ENCODE measurements at regions of chr3 and their contacts with region 1.

Region 1: DNA sequence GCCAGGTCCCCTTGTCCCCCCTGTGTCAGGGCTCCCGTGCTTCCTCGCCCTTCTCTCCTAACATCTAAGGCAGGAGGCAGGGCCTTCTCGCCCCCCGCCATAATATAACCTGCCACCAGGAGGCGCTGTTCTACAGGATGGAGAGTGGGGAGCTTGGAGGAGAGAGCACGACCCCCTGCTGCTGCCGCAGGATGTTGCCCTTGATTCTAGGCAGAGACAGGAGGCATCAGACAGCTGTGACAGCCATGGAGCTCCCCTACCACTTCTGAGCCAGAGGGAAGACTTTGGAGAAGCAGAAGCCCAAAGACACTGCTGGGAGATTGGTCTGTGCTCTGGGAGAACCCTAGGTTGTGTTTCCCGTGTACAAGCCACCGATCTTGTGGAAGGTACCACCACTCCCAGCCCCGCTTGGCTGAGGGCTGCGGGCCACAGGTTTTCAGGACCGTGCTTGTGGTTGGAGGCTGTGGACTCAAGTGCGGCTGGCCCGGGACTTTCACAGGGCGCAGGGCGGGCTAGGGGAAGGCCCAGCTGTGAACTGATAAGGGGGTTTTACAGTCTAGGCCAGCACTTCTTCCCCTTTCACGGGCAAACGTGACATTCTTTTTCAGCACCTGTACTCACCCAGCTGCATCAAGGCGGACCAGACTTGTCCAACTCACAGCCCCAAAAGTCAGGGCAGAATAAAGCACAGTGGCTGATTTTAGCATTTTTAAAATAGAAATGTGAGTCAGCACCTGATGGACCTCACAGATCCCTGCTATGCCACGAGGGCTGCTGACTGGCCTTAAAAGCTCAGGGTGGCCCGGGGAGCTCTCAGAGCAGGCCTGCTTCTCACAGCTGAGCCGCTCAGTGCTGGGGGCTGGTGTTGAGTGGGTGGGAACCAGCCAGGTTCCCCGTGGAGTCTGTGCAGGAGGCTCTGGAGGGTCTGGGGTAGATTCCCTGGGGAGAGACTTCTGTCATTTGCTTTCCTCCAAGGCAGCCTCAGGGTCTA is 2.6 kb upstream of the TIGIT start:
- DNase-seq: peak; percentile 79
- ATAC-seq: peak; percentile 95
- H3K4me3 ChIP-seq: no peak overlapping the region
- H3K27ac ChIP-seq: peak overlapping the region; percentile 88
- H3K4me1 ChIP-seq: peaks cover 18% of the 10 kb centered on the region
- H3K27me3 ChIP-seq: no peaks in the 10 kb centered on the region
- CTCF ChIP-seq: peak; percentile 92 to 93 (median 93)
- EP300 ChIP-seq: peak; percentile 60 to 79; a peak in 2 of 4 replicates
- POLR2A ChIP-seq: peak; percentile 55
- RAD21 ChIP-seq: peak; percentile 97

Region 2: DNA sequence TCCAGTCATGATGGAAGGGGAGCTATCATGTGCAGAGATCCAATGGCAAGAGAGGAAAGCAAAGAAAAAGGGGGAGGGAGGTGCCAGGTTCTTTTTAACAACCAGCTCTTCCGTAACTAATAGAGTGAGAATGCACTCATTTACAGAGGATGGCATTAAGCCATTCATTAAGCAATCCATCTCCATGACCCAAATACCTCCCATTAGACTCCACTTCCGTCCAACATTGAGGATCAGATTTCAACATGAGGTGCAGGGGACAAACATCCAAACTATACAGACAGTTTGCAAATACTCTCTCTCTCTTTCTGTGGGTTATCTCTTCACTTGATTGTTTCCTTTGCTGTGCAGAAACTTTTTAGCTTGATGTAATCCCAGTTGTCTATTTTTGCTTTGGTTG is 322.2 kb before region 1 on chr3:
- CTCF ChIA-PET with region 1: no interaction called
- POLR2A ChIA-PET with region 1: no interaction called
- RAD21 ChIA-PET with region 1: no interaction called
- SMC1A ChIA-PET with region 1: no interaction called
- in situ Hi-C with region 1: no loop called
- intact Hi-C with region 1: no loop called
- DNase-seq: no peak
- ATAC-seq: no peak
- H3K4me3 ChIP-seq: no peak overlapping the region
- H3K27ac ChIP-seq: no peak overlapping the region
- H3K4me1 ChIP-seq: no peaks in the 10 kb centered on the region
- H3K27me3 ChIP-seq: no peaks in the 10 kb centered on the region
- CTCF ChIP-seq: no peak
- EP300 ChIP-seq: no peak
- POLR2A ChIP-seq: no peak
- RAD21 ChIP-seq: no peak

Region 3: DNA sequence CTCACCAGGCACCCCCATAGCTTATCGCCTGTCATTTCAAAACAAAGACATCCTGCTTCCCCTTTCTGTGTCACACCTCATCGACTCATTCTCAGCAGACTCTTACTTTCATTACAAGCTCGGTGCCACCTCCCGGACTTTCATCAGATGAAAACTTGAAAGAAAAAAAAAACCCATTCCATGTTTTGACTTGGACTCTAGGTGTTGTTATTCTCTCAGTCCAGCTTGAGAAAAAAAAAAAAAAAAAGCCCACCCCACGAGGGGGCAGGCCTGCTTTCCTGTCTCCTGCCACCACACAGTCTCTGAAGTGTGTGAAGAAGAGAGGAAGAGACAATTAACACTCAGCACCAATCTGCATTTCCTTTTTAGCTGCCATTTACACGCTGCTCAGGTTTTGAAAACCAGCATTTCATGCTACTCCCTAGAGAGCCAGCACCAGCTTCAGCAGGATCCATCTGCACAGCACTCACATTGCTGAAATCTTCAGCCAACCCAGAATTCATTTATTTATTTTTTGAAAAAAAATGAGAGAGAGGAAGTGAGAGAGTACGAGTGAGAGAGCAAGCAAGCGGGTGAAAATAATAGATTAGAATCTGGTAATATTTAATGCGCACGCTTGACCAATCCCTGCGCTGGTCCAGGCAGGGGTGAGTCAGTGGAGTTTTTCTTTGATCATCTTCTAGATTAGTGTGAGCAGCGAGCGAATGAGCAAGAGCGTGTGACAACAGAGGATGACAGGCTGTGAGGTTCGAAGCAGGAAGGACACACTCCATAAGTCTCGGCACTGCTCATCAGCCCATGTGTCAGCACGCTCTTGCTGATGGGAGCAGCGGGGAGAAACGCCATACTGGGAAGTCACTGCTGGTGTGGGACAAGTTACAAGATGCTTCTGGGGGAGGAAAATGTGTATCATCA is 77.3 kb before region 1 on chr3:
- CTCF ChIA-PET with region 1: interaction called, 22 read pairs
- POLR2A ChIA-PET with region 1: interaction called, 21 read pairs
- RAD21 ChIA-PET with region 1: interaction called, 26 read pairs
- SMC1A ChIA-PET with region 1: interaction called, 18 read pairs
- in situ Hi-C with region 1: no loop called
- intact Hi-C with region 1: loop called (anchors 1 kb)
- DNase-seq: peak; percentile 84
- ATAC-seq: peak; percentile 91
- H3K4me3 ChIP-seq: peak overlapping the region; percentile 63
- H3K27ac ChIP-seq: peak overlapping the region; percentile 88
- H3K4me1 ChIP-seq: peaks cover 20% of the 10 kb centered on the region
- H3K27me3 ChIP-seq: no peaks in the 10 kb centered on the region; a peak in 1 of 4 replicates
- CTCF ChIP-seq: no peak
- EP300 ChIP-seq: peak; percentile 86 to 91
- POLR2A ChIP-seq: peak; percentile 74
- RAD21 ChIP-seq: no peak

Region 4: DNA sequence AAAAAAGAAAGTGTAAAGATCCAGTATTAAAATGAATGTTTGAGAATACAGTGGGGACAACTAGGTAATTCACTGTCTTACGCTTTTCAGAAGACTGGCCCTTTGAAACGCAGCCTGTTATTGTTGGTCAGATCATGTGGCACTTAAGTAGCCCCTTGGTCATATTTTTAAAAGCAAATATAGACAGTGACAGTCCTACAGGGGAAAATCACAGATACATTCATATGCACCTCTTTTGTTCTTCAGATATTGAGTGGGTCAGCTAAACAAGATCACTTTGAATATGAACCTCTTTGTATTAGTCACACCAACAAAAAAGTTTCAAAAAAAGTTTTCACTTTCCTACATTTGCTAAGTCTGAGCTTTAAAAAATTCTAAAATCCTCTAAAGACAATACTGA is 38.6 kb after region 1 on chr3:
- CTCF ChIA-PET with region 1: interaction called, 45 read pairs
- POLR2A ChIA-PET with region 1: interaction called, 11 read pairs
- RAD21 ChIA-PET with region 1: interaction called, 80 read pairs
- SMC1A ChIA-PET with region 1: interaction called, 54 read pairs
- in situ Hi-C with region 1: no loop called
- intact Hi-C with region 1: loop called (anchors 2 kb)
- DNase-seq: no peak
- ATAC-seq: peak; percentile 57
- H3K4me3 ChIP-seq: no peak overlapping the region
- H3K27ac ChIP-seq: no peak overlapping the region
- H3K4me1 ChIP-seq: peaks cover 18% of the 10 kb centered on the region; the same call in 1 of the 2 replicates
- H3K27me3 ChIP-seq: no peaks in the 10 kb centered on the region
- CTCF ChIP-seq: no peak
- EP300 ChIP-seq: peak in 1 of 2 experiments; percentile 18; a peak in 1 of 4 replicates
- POLR2A ChIP-seq: no peak
- RAD21 ChIP-seq: no peak

Region 5: DNA sequence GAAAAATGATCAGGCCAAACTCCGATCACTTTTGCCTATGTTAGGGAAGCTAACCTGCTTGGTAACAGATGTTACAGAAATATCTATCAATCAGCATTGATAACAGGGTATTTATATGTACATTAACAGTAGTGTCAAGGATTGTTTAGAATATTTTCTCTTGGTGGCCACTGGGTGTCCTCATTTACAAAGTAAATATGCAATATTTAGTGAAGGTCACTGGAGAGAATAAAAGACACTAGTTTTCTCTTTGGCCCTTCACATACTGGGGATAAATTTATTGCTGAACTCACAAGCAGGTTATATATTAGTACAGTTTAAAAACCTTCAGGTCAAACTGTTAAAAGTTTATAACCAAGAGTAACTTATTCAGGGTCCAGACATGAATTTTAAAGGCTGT is 71.6 kb after region 1 on chr3:
- CTCF ChIA-PET with region 1: interaction called, 37 read pairs
- POLR2A ChIA-PET with region 1: no interaction called
- RAD21 ChIA-PET with region 1: interaction called, 23 read pairs
- SMC1A ChIA-PET with region 1: interaction called, 15 read pairs
- in situ Hi-C with region 1: no loop called
- intact Hi-C with region 1: no loop called
- DNase-seq: no peak
- ATAC-seq: peak; percentile 87
- H3K4me3 ChIP-seq: no peak overlapping the region
- H3K27ac ChIP-seq: no peak overlapping the region
- H3K4me1 ChIP-seq: no peaks in the 10 kb centered on the region
- H3K27me3 ChIP-seq: no peaks in the 10 kb centered on the region
- CTCF ChIP-seq: peak in 2 of 3 experiments; percentile 37 to 51; a peak in 4 of 6 replicates
- EP300 ChIP-seq: no peak
- POLR2A ChIP-seq: no peak
- RAD21 ChIP-seq: peak; percentile 57

Region 6: DNA sequence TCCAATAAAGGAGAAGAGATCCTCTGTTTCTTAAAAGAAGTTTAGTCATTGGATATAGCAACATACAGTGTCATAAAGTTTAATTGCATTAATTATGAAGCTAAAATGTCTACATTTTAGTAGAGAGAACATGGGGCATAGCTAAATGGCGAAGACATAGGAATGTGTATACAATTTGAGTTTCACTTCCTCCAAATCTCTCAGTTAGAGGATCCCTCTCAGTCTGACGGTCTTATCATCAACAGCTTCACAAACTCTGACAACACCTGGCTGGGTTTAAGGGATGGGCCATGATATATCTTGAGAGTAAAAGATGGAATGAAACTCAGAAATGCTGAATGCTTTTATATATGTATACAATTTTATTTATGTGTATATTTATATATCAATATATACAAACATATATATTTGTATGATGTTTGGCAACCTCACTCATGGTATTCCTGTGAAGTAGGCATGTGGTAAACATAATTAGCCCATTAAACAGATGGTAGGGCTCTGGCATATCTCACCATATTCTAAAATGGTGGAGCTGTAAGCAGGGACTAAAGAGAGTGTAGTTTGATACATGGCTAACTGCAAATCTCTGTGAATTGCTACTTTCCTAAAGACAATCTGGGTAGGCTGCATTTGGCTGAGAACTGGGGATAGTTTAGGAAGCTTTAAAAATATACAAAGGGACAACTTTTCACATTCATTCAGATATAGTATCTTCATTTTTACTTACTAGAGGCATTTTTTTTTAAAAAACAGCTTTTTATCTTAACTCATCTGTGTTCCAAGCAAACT is 114.2 kb after region 1 on chr3:
- CTCF ChIA-PET with region 1: interaction called, 7 read pairs
- POLR2A ChIA-PET with region 1: no interaction called
- RAD21 ChIA-PET with region 1: interaction called, 10 read pairs
- SMC1A ChIA-PET with region 1: interaction called, 7 read pairs
- in situ Hi-C with region 1: no loop called
- intact Hi-C with region 1: no loop called
- DNase-seq: no peak
- ATAC-seq: peak; percentile 83
- H3K4me3 ChIP-seq: no peak overlapping the region
- H3K27ac ChIP-seq: no peak overlapping the region
- H3K4me1 ChIP-seq: peaks cover 3% of the 10 kb centered on the region; the same call in 1 of the 2 replicates
- H3K27me3 ChIP-seq: no peaks in the 10 kb centered on the region
- CTCF ChIP-seq: no peak
- EP300 ChIP-seq: no peak
- POLR2A ChIP-seq: no peak
- RAD21 ChIP-seq: no peak

Region 7: DNA sequence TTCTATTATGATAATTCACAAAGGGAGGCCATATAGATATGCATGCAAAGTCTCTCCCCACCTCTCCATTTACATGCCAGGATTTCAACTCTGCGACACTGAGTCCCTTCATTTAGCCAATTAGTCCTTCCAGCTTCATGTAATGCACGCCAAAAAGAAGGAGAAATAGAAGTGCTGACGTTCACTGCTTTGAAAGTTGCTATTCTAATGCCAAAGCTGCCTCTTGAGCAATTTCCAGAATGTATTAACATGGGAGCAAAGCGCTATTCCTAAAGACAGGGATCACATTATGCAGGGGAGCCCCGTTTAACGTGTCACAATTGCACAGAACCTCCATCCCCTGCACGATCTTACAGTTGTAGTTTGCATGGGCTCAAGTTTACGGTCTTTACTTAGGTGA is 133.1 kb after region 1 on chr3:
- CTCF ChIA-PET with region 1: interaction called, 131 read pairs
- POLR2A ChIA-PET with region 1: no interaction called
- RAD21 ChIA-PET with region 1: interaction called, 72 read pairs
- SMC1A ChIA-PET with region 1: interaction called, 110 read pairs
- in situ Hi-C with region 1: loop called (anchors 5 kb)
- intact Hi-C with region 1: loop called (anchors 2 kb)
- DNase-seq: no peak
- ATAC-seq: no peak
- H3K4me3 ChIP-seq: no peak overlapping the region
- H3K27ac ChIP-seq: no peak overlapping the region
- H3K4me1 ChIP-seq: peaks cover 7% of the 10 kb centered on the region
- H3K27me3 ChIP-seq: no peaks in the 10 kb centered on the region
- CTCF ChIP-seq: no peak
- EP300 ChIP-seq: no peak
- POLR2A ChIP-seq: no peak
- RAD21 ChIP-seq: no peak

Measured in GM12878 (cell line).